HEK293 (cell line): ENCODE measurements at regions of chr17 and their contacts with region 1.

Region 1: GRCh38 chr17:38605888-38606645 is at the start of gene SRCIN1:
- H3K4me3 ChIP-seq: peak within 1 kb of the TSS; percentile 60
- H3K27ac ChIP-seq: peak within 1 kb of the TSS; percentile 46; the same call in 1 of the 2 replicates
- H3K4me1 ChIP-seq: peaks cover 15% of the 10 kb centered on the region
- CTCF ChIP-seq: peak; percentile 98

Region 2: GRCh38 chr17:38591759-38592241 is 14.3 kb before region 1 on chr17:
- CTCF ChIA-PET with region 1: interaction called, 188 read pairs
- POLR2A ChIA-PET with region 1: no interaction called
- H3K4me3 ChIP-seq: no peak overlapping the region
- H3K27ac ChIP-seq: no peak overlapping the region
- H3K4me1 ChIP-seq: no peaks in the 10 kb centered on the region
- CTCF ChIP-seq: no peak

Region 3: GRCh38 chr17:38617011-38617867 is 11.2 kb after region 1 on chr17:
- CTCF ChIA-PET with region 1: interaction called, 39 read pairs
- POLR2A ChIA-PET with region 1: interaction called, 3 read pairs
- H3K4me3 ChIP-seq: no peak overlapping the region
- H3K27ac ChIP-seq: no peak overlapping the region
- H3K4me1 ChIP-seq: no peaks in the 10 kb centered on the region
- CTCF ChIP-seq: no peak